Dorsolateral prefrontal cortex (tissue), 120 donors: ENCODE measurements at regions of chr20 and their contacts with region 1.

Region 1: GRCh38 chr20:25629816-25630499 is 6.1 kb upstream of the NANP start:
- DNase-seq: no peak
- H3K4me3 ChIP-seq: no peak overlapping the region
- H3K27ac ChIP-seq: no peak overlapping the region
- H3K27me3 ChIP-seq: no peaks in the 10 kb centered on the region
- CTCF ChIP-seq: no peak

Region 2: DNA sequence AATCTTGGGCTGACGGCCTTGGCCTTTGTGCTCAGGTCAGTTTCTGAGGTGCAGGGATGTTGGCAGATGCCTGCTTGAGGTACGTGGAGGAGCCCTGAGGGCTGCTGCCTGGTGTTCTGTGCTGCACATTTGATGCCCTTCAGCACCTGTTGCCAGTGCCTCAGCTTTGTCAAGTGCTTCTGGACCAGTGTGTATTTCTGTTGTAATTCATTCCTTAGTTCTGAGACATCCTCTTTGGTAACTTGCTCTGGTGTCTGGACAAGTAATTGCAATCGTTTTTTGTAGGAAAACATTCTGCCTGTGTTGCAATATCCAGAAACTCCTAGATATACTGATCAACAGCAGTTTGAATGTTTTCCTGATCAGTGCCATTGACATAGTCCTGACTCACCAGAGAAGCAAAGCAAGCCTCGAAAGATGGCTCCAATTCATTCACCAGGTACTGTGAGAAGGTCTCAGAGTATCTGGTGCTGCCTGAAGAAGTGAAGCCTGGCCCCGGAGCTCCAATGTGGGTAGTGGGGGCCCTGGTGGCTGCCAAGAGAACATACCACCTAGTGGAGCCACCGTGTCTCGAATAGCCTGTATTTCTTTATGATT is 40.0 kb after region 1 on chr20:
- intact Hi-C with region 1: loop called in 1 of 2 experiments (anchors 5 kb)
- DNase-seq: no peak
- H3K4me3 ChIP-seq: no peak overlapping the region
- H3K27ac ChIP-seq: no peak overlapping the region
- H3K27me3 ChIP-seq: no peaks in the 10 kb centered on the region
- CTCF ChIP-seq: no peak